ENCODE measurements at regions of chr18 and their contacts with region 1.

Region 1: GRCh38 chr18:44943311-44943881 is 262.7 kb downstream of the SETBP1 start:
- DNase-seq: no peak
- ATAC-seq: no peak
- H3K4me3 ChIP-seq: no peak overlapping the region
- H3K4me3 Mint-ChIP-seq: no peak overlapping the region
- H3K27ac ChIP-seq: no peak overlapping the region
- H3K27ac Mint-ChIP-seq: no peak overlapping the region
- H3K4me1 ChIP-seq: no peaks in the 10 kb centered on the region
- H3K4me1 Mint-ChIP-seq: no peaks in the 10 kb centered on the region
- H3K27me3 ChIP-seq: no peaks in the 10 kb centered on the region
- H3K27me3 Mint-ChIP-seq: peaks cover 0 to 3% of the 10 kb centered on the region in 2 donors

Region 2: DNA sequence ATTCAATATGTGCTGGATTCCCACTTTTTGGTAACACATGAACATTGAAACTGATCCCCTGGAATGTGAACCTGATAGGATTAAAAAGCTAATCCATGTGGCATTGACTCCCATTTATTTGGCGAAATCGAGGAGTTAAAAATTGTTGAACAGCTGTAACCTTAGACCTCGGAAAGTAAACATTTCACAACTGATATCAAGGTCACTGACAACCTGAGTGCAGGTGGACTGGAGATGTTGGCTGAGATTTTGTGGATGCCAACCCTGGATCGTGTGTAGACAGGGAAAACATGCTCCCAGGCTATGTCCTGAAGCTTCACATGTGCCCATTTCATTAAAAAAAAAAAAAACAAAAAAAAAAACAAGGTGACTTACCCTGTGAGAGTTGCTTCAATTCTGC is 57.9 kb before region 1 on chr18:
- CTCF ChIA-PET with region 1: no interaction called
- POLR2A ChIA-PET with region 1: interaction called in 1 of 2 experiments, 13 read pairs
- DNase-seq: no peak
- ATAC-seq: no peak
- H3K4me3 ChIP-seq: no peak overlapping the region
- H3K4me3 Mint-ChIP-seq: no peak overlapping the region
- H3K27ac ChIP-seq: no peak overlapping the region
- H3K27ac Mint-ChIP-seq: no peak overlapping the region
- H3K4me1 ChIP-seq: no peaks in the 10 kb centered on the region
- H3K4me1 Mint-ChIP-seq: peaks cover 0 to 8% (median 4%) of the 10 kb centered on the region in 3 donors
- H3K27me3 ChIP-seq: no peaks in the 10 kb centered on the region
- H3K27me3 Mint-ChIP-seq: peaks cover 0 to 6% of the 10 kb centered on the region in 2 donors